Esophagus squamous epithelium (tissue), 5 donors: ENCODE measurements at regions of chr3 and their contacts with region 1.

Region 1: DNA sequence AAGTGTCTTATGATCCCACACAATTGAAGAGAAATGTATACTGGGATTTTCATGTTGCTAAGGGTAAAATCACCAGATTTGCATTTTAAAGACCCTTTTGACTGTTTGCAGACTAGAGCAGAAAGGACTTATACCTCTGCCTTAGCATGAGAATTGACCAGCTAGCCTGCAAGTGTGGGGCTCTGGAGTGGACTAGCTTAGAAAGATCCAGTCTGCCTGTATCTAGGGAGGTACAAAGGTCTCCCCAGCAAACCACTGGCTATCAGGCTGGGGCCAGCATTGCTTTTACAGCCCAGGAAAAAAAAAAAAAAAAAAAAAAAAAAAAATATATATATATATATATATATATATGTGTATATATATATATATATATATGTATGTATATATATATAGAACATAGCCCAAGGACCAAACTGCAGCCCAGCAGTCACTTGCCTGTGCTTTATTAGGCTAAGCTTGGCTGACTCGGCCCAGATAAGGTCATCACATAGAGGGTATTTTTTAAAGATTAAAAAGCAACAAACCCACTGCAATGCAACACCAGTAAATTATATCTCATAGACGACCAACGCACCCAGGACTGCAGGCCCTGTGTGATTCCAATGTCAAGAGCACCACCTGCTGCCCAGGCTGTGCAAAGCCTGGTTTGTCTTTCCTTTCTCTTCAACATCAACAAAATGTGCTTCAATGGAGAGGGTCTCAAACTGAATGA is 63.7 kb downstream of the DCLK3 start:
- DNase-seq: no peak
- H3K4me3 ChIP-seq: no peak overlapping the region
- H3K27ac ChIP-seq: no peak overlapping the region
- H3K4me1 ChIP-seq: no peaks in the 10 kb centered on the region
- H3K27me3 ChIP-seq: peaks cover 0 to 6% (median 0%) of the 10 kb centered on the region in 4 donors
- CTCF ChIP-seq: peak; percentile 22 to 72 (median 56)
- POLR2A ChIP-seq: no peak

Region 2: GRCh38 chr3:35965908-35966307 is 734.8 kb before region 1 on chr3:
- intact Hi-C with region 1: loop called (anchors 5 kb)
- DNase-seq: no peak
- H3K4me3 ChIP-seq: no peak overlapping the region
- H3K27ac ChIP-seq: no peak overlapping the region
- H3K4me1 ChIP-seq: no peaks in the 10 kb centered on the region
- H3K27me3 ChIP-seq: no peaks in the 10 kb centered on the region
- CTCF ChIP-seq: peak in 4 of 6 experiments; percentile 20 to 49 (median 38)
- POLR2A ChIP-seq: no peak